Cardiac septum (tissue), 1 donor: ENCODE measurements at regions of chr7 and their contacts with region 1.

Region 1: GRCh38 chr7:131107337-131108211 is 220.1 kb upstream of the MKLN1 start:
- DNase-seq: peak; percentile 86

Region 2: DNA sequence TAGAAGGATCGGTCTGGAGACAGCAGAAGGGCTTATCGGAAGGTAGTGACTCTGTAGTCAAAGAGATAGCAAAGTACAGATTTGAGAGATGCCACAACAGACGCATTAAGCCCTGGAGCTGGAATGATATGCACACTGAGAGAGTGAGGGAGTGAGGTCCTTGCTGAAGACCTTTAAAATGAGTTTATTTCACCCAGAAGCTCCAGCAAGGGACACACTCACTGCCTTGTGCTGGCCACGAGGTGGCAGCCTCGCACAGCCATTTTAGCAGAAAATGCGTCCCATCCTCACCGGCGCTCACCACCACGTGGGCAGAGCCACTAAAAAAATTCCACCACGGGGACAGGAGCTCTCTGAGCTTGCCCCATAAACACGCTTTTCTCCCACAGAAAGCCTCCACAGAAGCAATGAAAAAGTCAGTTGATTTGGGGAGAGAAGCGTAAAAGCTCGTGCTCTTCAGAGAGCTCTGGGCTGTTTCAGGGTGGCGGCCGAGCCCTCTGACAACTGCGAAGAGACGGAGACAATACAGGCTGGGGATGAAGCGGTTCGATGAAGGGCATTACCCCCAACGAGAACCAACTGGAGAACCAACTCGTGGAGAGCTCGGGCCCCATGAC is 210.6 kb before region 1 on chr7:
- intact Hi-C with region 1: loop called (anchors 10 kb)
- DNase-seq: peak; percentile 84

Region 3: GRCh38 chr7:131071786-131072504 is 35.6 kb before region 1 on chr7:
- intact Hi-C with region 1: loop called (anchors 2 kb)
- DNase-seq: no peak

Region 4: GRCh38 chr7:131231381-131232220 is 124.0 kb after region 1 on chr7:
- intact Hi-C with region 1: loop called (anchors 5 kb)
- DNase-seq: peak; percentile 80

Region 5: GRCh38 chr7:131284702-131285419 is 177.3 kb after region 1 on chr7:
- intact Hi-C with region 1: loop called (anchors 5 kb)
- DNase-seq: no peak

Region 6: GRCh38 chr7:131302876-131303707 is 195.5 kb after region 1 on chr7:
- intact Hi-C with region 1: loop called (anchors 2 kb)
- DNase-seq: no peak